ENCODE measurements at regions of chr16 and their contacts with region 1.

Region 1: DNA sequence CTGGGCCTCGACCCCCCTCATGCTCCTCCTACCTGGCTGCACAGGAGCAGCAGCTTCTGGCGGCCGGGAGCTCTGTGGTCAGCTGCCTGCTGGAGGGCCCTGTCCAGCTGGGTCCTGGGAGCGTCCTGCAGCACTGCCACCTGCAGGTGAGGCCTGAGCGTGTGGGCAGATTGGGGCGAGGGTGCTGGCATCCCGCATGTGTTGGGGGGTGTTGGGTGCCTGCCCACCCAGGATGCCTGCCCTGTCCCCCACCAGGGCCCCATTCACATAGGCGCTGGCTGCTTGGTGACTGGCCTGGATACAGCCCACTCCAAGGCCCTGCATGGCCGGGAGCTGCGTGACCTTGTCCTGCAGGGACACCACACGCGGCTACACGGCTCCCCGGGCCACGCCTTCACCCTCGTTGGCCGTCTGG is 16.5 kb downstream of the FCSK start:
- DNase-seq: peak in 1 of 2 experiments; percentile 37
- H3K4me3 ChIP-seq: no peak overlapping the region
- H3K27ac ChIP-seq: no peak overlapping the region
- H3K4me1 ChIP-seq: peaks cover 12% of the 10 kb centered on the region
- H3K27me3 ChIP-seq: no peaks in the 10 kb centered on the region
- CTCF ChIP-seq: peak; percentile 58

Region 2: DNA sequence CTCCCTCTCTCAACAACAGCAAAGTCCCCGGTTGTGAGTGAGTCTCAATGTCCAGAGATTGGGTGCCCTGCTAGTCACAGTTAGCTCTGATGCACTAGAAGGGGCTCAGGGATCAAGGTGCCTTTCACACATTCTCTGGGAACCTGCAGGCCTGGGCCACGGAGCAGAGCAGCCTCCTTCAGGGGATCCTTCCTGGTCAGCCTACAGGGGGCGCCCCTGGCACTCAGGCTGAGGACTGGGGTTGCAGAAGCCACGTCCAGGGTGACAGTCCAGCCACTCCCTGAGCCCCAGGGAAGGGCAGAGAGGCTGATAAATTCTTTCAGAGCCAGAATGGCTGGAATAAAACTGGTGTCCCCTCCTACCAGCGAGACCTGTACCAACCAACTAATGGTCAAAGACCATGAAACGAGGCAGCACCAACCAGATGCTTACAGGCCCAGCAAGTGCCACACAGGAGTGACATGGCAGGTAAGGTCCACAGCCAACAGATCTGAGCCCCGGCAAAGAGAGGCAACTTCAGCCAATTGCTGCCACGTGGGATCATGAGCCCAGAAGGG is 75.5 kb before region 1 on chr16:
- CTCF ChIA-PET with region 1: no interaction called
- POLR2A ChIA-PET with region 1: no interaction called
- intact Hi-C with region 1: loop called (anchors 5 kb)
- DNase-seq: peak; percentile 60 to 78
- H3K4me3 ChIP-seq: no peak overlapping the region
- H3K27ac ChIP-seq: no peak overlapping the region
- H3K4me1 ChIP-seq: peaks cover 16% of the 10 kb centered on the region
- H3K27me3 ChIP-seq: no peaks in the 10 kb centered on the region
- CTCF ChIP-seq: peak; percentile 81

Region 3: GRCh38 chr16:70523076-70523742 is 52.3 kb after region 1 on chr16 and contains the start of gene COG4:
- CTCF ChIA-PET with region 1: no interaction called
- POLR2A ChIA-PET with region 1: no interaction called
- intact Hi-C with region 1: loop called (anchors 1 kb)
- DNase-seq: peak; percentile 66 to 82
- H3K4me3 ChIP-seq: peak within 1 kb of the TSS; percentile 99
- H3K27ac ChIP-seq: peak within 1 kb of the TSS; percentile 88
- H3K4me1 ChIP-seq: peaks cover 35% of the 10 kb centered on the region
- H3K27me3 ChIP-seq: no peaks in the 10 kb centered on the region
- CTCF ChIP-seq: no peak
- total RNA-seq, gene COG4: 54.2 and 61.1 TPM in 2 replicates

Region 4: GRCh38 chr16:70561623-70562022 is 90.7 kb after region 1 on chr16:
- CTCF ChIA-PET with region 1: no interaction called
- POLR2A ChIA-PET with region 1: no interaction called
- intact Hi-C with region 1: no loop called
- DNase-seq: peak; percentile 83 to 98
- H3K4me3 ChIP-seq: no peak overlapping the region
- H3K27ac ChIP-seq: peak overlapping the region; percentile 96
- H3K4me1 ChIP-seq: peaks cover 58% of the 10 kb centered on the region
- H3K27me3 ChIP-seq: no peaks in the 10 kb centered on the region
- CTCF ChIP-seq: no peak